HepG2 (cell line): ENCODE measurements at regions of chr1 and their contacts with region 1.

Region 1: DNA sequence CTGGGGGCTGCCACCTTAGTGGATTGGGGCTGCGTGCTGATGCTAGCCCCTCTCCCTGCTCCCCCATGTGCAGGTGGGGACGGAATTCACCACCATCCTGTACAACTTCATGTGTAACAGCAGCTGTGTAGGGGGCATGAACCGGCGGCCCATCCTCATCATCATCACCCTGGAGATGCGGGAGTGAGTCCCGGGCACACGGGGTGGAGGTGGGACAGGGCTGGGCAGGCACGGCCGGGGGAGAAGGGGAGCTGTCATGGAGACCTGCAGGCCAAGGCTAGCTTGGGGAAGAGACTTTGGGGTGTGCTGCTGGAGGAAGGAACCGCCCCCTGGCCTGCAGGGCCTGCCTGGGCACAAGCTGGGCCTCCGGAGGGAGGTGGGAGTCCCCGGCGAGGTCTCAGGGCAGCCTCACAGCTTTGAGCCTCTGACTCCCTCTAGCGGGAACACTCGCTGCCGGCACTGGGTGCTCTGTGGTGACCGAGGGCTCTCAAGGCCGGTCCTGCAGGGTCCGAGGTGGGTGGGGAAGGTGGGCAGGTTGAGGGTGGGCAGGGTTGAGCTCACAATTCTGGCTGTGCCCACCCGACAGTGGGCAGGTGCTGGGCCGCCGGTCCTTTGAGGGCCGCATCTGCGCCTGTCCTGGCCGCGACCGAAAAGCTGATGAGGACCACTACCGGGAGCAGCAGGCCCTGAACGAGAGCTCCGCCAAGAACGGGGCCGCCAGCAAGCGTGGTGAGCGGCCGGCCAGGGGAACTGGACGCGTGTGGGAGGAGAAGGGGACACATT is 25.0 kb upstream of the CCDC27 start:
- DNase-seq: no peak
- ATAC-seq: peak; percentile 36
- H3K4me3 ChIP-seq: no peak overlapping the region
- H3K27ac ChIP-seq: no peak overlapping the region
- H3K4me1 ChIP-seq: peaks cover 9% of the 10 kb centered on the region
- H3K27me3 ChIP-seq: no peaks in the 10 kb centered on the region
- CTCF ChIP-seq: peak; percentile 56
- EP300 ChIP-seq: no peak
- POLR2A ChIP-seq: no peak
- RAD21 ChIP-seq: no peak

Region 2: DNA sequence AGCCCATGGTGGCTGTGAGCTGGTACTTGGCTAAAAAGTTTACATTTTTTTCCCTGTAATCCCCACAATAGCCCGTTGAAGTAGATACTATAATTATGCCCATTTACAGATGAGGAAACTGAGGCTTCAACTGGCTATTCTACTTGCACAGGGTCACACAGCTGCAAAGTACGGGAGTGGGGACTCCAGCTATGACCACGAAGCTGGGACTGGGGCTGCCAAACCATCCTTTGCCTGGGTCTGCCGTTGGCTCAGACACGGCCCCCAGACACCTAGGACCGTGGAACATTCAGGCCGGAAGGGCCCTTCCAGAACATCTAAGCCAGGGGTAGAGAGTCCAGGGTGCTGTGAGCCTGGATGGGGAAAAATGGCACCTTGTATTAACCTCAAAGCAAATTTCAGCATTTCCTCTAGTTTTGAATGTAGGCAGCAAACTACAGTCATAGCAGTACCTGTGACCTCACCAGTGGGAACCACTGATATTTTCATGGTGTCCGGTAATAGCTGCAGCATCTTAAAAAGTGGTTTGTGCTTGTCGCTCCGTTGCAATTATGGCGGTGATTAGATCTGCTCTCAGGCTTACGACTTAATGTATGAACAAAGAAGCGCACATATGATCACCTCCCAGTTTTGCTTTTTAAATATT is 70.7 kb before region 1 on chr1:
- CTCF ChIA-PET with region 1: no interaction called
- POLR2A ChIA-PET with region 1: no interaction called
- in situ Hi-C with region 1: no loop called
- intact Hi-C with region 1: no loop called
- DNase-seq: no peak
- ATAC-seq: no peak
- H3K4me3 ChIP-seq: no peak overlapping the region
- H3K27ac ChIP-seq: no peak overlapping the region
- H3K4me1 ChIP-seq: peaks cover 12% of the 10 kb centered on the region
- H3K27me3 ChIP-seq: peaks cover 2 to 6% of the 10 kb centered on the region in 2 experiments; a peak in 2 of 5 replicates
- CTCF ChIP-seq: no peak
- EP300 ChIP-seq: no peak
- POLR2A ChIP-seq: no peak
- RAD21 ChIP-seq: no peak

Region 3: GRCh38 chr1:3678361-3679097 is 48.7 kb before region 1 on chr1:
- CTCF ChIA-PET with region 1: no interaction called
- POLR2A ChIA-PET with region 1: no interaction called
- in situ Hi-C with region 1: no loop called
- intact Hi-C with region 1: no loop called
- DNase-seq: no peak
- ATAC-seq: no peak
- H3K4me3 ChIP-seq: no peak overlapping the region
- H3K27ac ChIP-seq: no peak overlapping the region
- H3K4me1 ChIP-seq: no peaks in the 10 kb centered on the region
- H3K27me3 ChIP-seq: no peaks in the 10 kb centered on the region; a peak in 1 of 5 replicates
- CTCF ChIP-seq: no peak
- EP300 ChIP-seq: no peak
- POLR2A ChIP-seq: no peak
- RAD21 ChIP-seq: no peak

Region 4: DNA sequence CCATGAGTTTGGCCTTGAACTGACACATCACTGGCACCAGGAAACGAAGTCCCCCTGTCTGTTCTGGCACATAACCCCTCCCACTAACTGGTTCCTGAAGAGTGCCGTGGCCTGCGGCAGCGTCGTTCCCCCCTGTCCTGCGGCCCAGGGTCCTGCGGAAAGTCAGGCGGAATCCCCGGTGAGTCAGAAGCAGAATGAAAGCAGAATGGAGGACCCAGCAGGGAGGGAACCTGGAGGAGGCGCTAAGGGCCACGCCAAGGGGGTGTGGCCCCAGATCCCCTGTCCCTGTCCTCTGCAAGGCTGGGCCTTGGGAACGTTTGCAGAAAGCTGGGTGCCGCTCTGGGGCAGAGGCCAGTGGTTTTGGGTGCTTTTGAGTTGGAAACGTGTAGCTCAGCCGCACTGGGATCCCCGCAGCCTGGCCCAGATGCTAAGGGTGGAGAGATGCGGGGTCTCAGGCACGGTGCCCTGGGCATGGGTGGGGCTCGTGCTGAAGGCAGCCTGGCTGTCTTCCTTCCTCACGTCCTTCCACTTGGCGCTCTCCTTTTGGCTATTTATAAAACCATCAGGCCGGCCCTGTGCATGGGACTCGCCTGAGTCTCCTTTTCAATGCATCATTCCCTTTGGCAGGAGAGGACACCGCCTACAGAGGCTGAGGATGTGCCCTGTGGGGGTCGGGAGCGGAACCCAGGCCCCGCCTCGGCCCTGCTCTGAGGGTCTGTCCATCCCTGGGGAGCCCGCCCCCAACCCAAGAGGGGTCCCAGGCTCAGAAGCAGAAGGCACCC is 38.7 kb before region 1 on chr1:
- CTCF ChIA-PET with region 1: no interaction called
- POLR2A ChIA-PET with region 1: no interaction called
- in situ Hi-C with region 1: loop called (anchors 5 kb)
- intact Hi-C with region 1: no loop called
- DNase-seq: no peak
- ATAC-seq: no peak
- H3K4me3 ChIP-seq: no peak overlapping the region
- H3K27ac ChIP-seq: no peak overlapping the region
- H3K4me1 ChIP-seq: no peaks in the 10 kb centered on the region
- H3K27me3 ChIP-seq: no peaks in the 10 kb centered on the region; a peak in 1 of 5 replicates
- CTCF ChIP-seq: no peak
- EP300 ChIP-seq: no peak
- POLR2A ChIP-seq: no peak
- RAD21 ChIP-seq: no peak

Region 5: DNA sequence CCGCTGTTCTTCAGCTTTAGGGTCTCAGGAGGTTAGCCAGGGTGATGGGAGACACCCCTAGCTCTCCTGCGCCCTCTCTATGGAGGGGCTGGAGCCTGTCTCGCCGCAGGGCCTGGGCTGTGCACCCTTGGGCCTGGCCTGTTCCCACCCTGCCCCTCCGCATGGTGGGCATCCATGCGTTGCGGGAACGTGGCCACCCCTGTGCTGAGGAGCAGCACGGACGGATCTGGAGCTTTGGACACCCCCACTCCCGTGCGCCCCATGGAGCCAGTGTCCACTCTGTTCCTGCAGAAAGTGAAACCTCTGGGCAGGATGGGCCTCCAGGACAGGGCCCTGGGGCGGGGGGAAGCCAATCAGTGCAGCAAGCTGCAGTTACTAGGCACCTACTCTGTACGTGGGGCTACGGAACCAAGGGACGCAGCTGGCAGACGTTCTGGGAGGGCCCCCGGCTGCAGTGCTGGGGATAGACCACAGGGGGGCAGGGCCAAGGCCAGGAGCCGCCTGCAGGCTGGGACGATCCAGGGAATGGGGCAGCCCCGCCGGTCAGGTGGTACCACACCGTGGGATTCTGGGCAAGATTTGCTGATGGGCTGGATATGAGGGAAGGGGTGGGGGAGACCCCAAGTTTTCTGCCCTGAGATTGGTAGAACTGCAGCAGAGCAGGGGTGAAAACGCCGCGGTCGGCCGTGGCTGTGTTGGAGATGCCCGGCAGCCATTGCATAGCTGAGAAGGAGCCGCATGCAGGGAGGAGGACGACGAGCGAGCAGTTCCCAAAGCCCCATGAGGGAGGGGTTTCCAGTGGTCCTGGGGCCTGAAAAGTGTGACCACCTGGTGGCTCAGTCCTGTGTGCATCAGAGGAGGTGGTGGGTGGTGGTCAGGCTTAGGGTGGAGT is 31.7 kb before region 1 on chr1:
- CTCF ChIA-PET with region 1: interaction called, 20 read pairs
- POLR2A ChIA-PET with region 1: no interaction called
- in situ Hi-C with region 1: no loop called
- intact Hi-C with region 1: loop called (anchors 1 kb)
- DNase-seq: peak; percentile 10
- ATAC-seq: peak; percentile 91
- H3K4me3 ChIP-seq: no peak overlapping the region
- H3K27ac ChIP-seq: no peak overlapping the region
- H3K4me1 ChIP-seq: no peaks in the 10 kb centered on the region
- H3K27me3 ChIP-seq: no peaks in the 10 kb centered on the region
- CTCF ChIP-seq: peak; percentile 89
- EP300 ChIP-seq: no peak
- POLR2A ChIP-seq: no peak
- RAD21 ChIP-seq: peak; percentile 75

Region 6: DNA sequence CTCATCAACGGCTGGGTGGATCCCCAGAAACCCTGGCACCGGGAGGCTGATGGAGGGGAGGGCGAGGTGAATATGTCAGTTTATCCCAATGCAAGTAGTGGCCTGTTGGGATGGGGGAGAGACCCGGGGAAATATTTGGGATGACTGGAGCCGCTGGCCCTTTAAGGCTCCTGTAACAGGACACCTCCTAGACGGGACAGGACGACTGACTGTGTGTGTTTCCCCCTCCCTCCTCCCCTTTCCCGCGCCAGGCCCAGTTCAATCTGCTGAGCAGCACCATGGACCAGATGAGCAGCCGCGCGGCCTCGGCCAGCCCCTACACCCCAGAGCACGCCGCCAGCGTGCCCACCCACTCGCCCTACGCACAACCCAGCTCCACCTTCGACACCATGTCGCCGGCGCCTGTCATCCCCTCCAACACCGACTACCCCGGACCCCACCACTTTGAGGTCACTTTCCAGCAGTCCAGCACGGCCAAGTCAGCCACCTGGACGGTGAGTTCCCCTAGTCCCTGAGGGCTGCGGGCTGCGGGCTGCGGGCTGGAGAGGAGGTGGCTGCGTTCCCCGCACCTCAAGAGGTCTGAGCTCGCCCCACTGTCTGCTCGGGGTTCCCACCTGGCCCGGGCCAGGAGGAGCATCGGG is 19.8 kb before region 1 on chr1:
- CTCF ChIA-PET with region 1: no interaction called
- POLR2A ChIA-PET with region 1: no interaction called
- in situ Hi-C with region 1: no loop called
- intact Hi-C with region 1: no loop called
- DNase-seq: no peak
- ATAC-seq: no peak
- H3K4me3 ChIP-seq: no peak overlapping the region
- H3K27ac ChIP-seq: no peak overlapping the region
- H3K4me1 ChIP-seq: no peaks in the 10 kb centered on the region
- H3K27me3 ChIP-seq: no peaks in the 10 kb centered on the region
- CTCF ChIP-seq: no peak
- EP300 ChIP-seq: no peak
- POLR2A ChIP-seq: no peak
- RAD21 ChIP-seq: no peak

Region 7: DNA sequence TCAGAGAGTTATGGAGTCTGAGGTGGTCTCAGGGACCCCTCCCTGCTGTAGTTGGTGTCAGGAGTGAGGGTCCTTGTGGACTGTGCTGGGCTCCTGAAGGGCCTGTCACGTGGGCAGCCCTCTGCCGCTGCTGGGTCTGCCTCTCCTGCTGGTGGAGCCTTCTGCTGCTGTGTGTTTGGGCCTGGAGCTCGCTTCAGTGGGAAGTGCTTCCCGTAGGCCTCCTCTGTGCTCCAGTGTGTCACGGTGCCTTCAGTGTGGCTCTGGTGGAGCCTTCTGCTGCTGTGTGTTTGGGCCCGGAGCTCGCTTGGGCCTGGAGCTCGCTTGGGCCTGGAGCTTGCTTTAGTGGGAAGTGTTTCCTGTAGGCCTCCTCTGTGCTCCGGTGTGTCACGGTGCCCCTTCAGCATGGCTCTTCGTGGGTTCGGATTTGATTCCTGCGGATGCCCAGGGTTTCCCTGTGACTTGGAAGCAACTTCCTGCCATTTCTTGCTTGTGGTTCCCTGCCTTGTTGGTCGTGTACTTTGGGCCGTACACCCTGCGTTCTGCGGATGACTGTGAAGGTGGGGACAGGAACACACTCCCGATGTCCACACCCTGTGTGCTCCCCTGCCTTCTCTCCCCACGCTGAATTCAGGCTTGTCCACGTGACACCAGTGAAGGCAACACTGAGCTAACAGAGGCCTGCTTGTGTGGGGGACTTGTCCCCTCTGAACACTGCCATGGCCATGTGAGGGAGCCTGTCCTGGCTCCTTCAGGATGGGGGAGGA is 153.4 kb after region 1 on chr1:
- CTCF ChIA-PET with region 1: no interaction called
- POLR2A ChIA-PET with region 1: no interaction called
- in situ Hi-C with region 1: no loop called
- intact Hi-C with region 1: no loop called
- DNase-seq: no peak
- ATAC-seq: no peak; the same call in 2 of the 3 replicates
- H3K4me3 ChIP-seq: no peak overlapping the region
- H3K27ac ChIP-seq: no peak overlapping the region
- H3K4me1 ChIP-seq: 0 out of 2 replicates have a peak, but pooled peaks cover 6% of the 10 kb centered on the region
- H3K27me3 ChIP-seq: no peaks in the 10 kb centered on the region
- CTCF ChIP-seq: no peak
- EP300 ChIP-seq: no peak
- POLR2A ChIP-seq: no peak
- RAD21 ChIP-seq: no peak